AG04450 (cell line): ENCODE measurements at regions of chr18 and their contacts with region 1.

Region 1: GRCh38 chr18:43620936-43621335 is 343.6 kb upstream of the SYT4 start:
- DNase-seq: no peak
- H3K4me3 ChIP-seq: no peak overlapping the region
- H3K27ac ChIP-seq: no peak overlapping the region
- H3K27me3 ChIP-seq: no peaks in the 10 kb centered on the region
- CTCF ChIP-seq: peak; percentile 48

Region 2: DNA sequence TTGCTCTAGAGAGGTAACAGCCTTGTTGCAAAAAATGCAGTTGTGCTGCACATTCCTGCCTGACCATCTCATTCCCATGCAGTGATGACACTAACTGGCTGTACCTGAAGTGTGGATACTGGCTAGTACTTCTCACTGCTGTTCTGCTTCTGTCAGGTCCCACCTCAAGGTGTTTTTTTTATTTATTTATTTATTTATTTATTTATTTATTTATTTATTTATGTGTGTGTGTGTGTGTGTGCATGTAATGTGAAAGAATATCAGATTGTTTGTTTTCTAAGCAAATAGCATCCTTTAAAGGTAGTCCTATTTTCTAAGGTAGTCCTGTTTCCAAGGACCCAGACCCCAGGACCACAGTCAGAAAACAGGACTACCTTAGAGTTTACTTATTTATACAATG is 256.4 kb before region 1 on chr18:
- CTCF ChIA-PET with region 1: no interaction called
- POLR2A ChIA-PET with region 1: no interaction called
- DNase-seq: no peak
- H3K4me3 ChIP-seq: no peak overlapping the region
- H3K27ac ChIP-seq: no peak overlapping the region
- H3K27me3 ChIP-seq: no peaks in the 10 kb centered on the region
- CTCF ChIP-seq: no peak

Region 3: GRCh38 chr18:43661570-43661969 is 40.6 kb after region 1 on chr18:
- CTCF ChIA-PET with region 1: interaction called, 11 read pairs
- POLR2A ChIA-PET with region 1: no interaction called
- DNase-seq: peak; percentile 55
- H3K4me3 ChIP-seq: no peak overlapping the region
- H3K27ac ChIP-seq: no peak overlapping the region
- H3K27me3 ChIP-seq: no peaks in the 10 kb centered on the region
- CTCF ChIP-seq: peak; percentile 67

Region 4: GRCh38 chr18:44320619-44321460 is 699.9 kb after region 1 on chr18:
- CTCF ChIA-PET with region 1: interaction called, 20 read pairs
- POLR2A ChIA-PET with region 1: no interaction called
- DNase-seq: no peak
- H3K4me3 ChIP-seq: no peak overlapping the region
- H3K27ac ChIP-seq: no peak overlapping the region
- H3K27me3 ChIP-seq: no peaks in the 10 kb centered on the region
- CTCF ChIP-seq: no peak

Region 5: DNA sequence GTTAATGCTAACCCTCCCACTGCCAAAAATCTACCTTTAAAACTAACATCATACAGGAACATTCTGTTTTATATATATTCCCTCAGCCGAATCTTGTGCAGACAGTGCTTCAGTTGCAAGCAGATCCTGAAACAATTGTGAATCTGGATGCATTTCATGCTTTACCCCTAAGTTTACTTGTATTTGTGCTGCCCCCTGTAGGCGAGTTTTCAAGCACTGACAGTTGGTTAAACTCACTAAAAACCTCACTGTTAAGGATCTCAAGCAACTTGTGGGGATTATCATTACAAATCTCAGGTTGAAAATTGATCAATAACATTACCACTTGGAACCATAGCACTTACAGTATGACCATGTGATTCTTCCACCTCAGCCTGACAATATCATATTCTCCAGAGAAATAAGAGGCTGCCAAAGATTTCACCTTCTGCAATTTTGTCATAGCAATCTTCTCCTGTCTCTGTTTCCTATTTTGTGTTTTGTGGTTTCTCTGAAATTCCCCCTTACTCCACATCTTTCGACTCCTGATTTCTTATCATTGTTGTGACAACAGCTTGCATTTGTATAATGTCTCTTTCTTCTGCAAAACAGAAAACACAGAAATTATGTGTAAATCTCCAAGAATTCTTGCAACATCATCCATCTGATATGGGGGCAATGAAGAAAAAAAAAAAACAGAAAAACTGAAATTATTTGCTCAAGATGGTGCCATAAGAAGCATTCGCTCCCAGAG is 705.1 kb after region 1 on chr18:
- CTCF ChIA-PET with region 1: interaction called, 20 read pairs
- POLR2A ChIA-PET with region 1: no interaction called
- DNase-seq: peak; percentile 42
- H3K4me3 ChIP-seq: no peak overlapping the region
- H3K27ac ChIP-seq: no peak overlapping the region
- H3K27me3 ChIP-seq: no peaks in the 10 kb centered on the region
- CTCF ChIP-seq: peak; percentile 74

Region 6: GRCh38 chr18:45384137-45384961 is 1763.4 kb after region 1 on chr18:
- CTCF ChIA-PET with region 1: interaction called, 10 read pairs
- POLR2A ChIA-PET with region 1: no interaction called
- DNase-seq: no peak
- H3K4me3 ChIP-seq: no peak overlapping the region
- H3K27ac ChIP-seq: no peak overlapping the region
- H3K27me3 ChIP-seq: no peaks in the 10 kb centered on the region
- CTCF ChIP-seq: peak; percentile 62